ENCODE measurements at regions of chr1 and their contacts with region 1.

Region 1: GRCh38 chr1:221435504-221435904 is 306.4 kb downstream of the DUSP10 start:
- DNase-seq: no peak
- ATAC-seq: peak; percentile 71 to 75
- H3K4me3 ChIP-seq: no peak overlapping the region
- H3K27ac ChIP-seq: no peak overlapping the region
- H3K4me1 ChIP-seq: no peaks in the 10 kb centered on the region
- H3K27me3 ChIP-seq: no peaks in the 10 kb centered on the region

Region 2: DNA sequence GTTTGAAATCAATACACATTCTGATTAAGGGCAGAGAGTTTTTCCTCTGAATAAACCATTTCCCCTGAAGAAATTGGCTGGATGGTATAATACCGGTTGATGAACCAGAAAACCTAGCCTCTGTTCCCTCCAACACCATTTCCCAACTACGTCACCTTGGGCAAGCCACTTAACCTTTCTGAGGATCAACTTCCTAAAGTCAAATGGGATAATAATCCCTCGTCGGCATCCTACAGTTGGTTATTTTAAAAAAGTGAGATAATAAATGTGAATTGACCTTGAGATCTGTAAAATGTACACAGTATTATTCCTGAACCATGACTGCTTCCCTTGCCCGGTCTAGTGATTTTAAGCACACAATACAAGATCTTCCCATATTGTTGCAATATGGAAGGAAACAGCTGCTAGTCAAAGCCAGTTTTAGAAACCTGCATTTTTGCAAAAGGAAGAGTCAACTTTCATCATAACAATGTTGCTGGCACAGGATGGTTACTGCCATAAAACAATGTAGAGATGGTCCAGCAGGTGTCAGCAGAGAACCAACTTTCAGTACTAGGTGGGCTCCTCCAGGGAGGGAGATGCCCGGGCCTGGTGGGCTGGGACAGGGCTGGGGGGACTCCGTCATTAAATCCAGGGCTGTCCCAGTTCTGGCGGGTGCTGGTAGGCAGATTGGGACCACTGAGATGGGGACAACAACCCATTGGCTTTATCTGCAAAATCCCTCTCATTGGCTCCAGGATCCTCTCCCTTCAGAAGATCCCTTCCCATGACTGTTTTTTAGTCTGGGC is 561.4 kb before region 1 on chr1:
- intact Hi-C with region 1: loop called in 3 of 4 experiments (anchors 5 to 10 kb)
- DNase-seq: peak; percentile 49 to 76 (median 70)
- ATAC-seq: peak in 1 of 2 donors; percentile 27
- H3K4me3 ChIP-seq: no peak overlapping the region
- H3K27ac ChIP-seq: no peak overlapping the region
- H3K4me1 ChIP-seq: peaks cover 2% of the 10 kb centered on the region
- H3K27me3 ChIP-seq: no peaks in the 10 kb centered on the region

Region 3: DNA sequence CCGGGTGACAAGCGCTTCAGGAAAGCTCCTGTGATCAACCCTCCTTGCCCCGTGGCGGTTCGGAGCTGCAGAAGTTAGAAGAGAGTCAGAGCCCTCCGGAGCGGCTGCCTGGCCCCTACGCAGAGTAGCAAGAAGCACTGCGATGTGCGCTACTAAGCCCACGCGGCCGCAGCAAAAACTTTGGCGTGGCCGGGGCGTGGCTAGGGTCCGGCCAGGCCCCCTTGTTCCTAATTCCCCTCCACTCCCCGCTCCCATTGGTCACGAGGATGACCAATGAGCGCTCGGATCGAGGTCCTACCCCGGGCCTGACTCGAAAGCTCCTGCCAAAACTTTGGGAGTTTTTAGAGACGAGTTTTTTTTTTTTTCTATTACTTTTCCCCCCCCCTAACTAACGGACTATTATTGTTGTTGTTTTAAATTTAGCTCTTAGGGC is 556.4 kb before region 1 on chr1 and contains the start of gene HLX:
- intact Hi-C with region 1: loop called in 3 of 4 experiments (anchors 5 to 10 kb)
- DNase-seq: peak; percentile 94 to 97 (median 97)
- ATAC-seq: peak; percentile 95 to 96
- H3K4me3 ChIP-seq: peak within 1 kb of the TSS; percentile 85
- H3K27ac ChIP-seq: peak within 1 kb of the TSS; percentile 88
- H3K4me1 ChIP-seq: peaks cover 2% of the 10 kb centered on the region
- H3K27me3 ChIP-seq: no peaks in the 10 kb centered on the region
- total RNA-seq, gene HLX: 4.1 to 9.4 (median 6.9) TPM

Region 4: DNA sequence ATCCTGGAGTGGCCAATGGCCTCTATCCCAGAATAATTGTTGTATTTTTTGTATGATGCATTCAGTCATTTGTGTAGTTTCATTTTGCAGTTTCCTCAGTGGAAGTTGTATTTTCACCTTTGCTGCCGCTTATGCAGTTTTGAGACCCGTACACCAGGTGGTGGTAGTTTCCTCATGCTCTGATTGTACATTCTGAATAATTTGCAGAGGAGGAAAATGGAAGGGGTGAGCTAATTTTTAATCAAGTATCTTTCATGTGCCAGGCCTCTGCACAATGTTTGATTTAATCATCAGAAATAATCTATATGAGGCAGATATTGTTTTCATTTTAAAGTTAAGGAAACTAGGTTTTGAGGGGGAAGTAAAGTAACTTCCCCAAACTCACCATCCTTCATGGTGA is 526.7 kb before region 1 on chr1:
- intact Hi-C with region 1: loop called in 1 of 4 experiments (anchors 10 kb)
- DNase-seq: peak in 1 of 3 donors; percentile 49
- ATAC-seq: peak in 1 of 2 donors; percentile 40
- H3K4me3 ChIP-seq: no peak overlapping the region
- H3K27ac ChIP-seq: no peak overlapping the region
- H3K4me1 ChIP-seq: no peaks in the 10 kb centered on the region
- H3K27me3 ChIP-seq: no peaks in the 10 kb centered on the region

Region 5: DNA sequence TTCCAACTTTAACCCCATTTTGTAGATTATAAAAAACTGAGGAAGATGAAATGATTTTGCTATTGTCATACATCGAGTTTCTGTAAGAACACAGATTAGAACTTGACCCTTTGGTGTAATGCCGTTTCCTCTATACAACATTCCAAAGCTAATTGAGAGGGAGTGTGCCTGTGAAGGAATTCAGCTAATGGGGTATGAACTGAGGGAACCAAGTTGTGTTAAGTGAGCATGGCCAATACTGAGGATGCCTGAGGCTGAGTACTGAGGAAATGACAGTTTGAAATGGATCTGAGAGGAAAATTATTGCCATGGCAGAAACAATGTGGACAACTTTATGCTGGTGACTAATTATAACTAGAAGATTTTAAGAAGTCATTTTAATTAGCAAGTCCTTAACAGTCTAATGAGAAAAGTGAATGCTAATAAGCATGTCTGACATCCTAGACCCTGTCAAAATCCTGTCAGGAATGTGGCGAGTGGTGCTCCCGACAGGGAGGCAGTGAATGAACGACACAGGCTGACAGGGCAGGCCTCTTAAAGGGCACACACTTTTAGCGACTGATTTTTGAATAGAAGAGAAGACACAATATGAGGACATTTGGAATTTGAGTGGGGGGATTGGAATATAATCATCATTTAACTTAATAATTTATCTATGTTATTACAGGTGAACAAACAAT is 293.8 kb before region 1 on chr1:
- intact Hi-C with region 1: no loop called
- DNase-seq: no peak
- ATAC-seq: no peak
- H3K4me3 ChIP-seq: no peak overlapping the region
- H3K27ac ChIP-seq: no peak overlapping the region
- H3K4me1 ChIP-seq: no peaks in the 10 kb centered on the region
- H3K27me3 ChIP-seq: no peaks in the 10 kb centered on the region

Region 6: GRCh38 chr1:221263831-221264767 is 171.4 kb before region 1 on chr1:
- intact Hi-C with region 1: loop called in 3 of 4 experiments (anchors 5 to 10 kb)
- DNase-seq: peak in 2 of 3 donors; percentile 27 to 47
- ATAC-seq: peak; percentile 56 to 72
- H3K4me3 ChIP-seq: no peak overlapping the region
- H3K27ac ChIP-seq: peak overlapping the region; percentile 27
- H3K4me1 ChIP-seq: peaks cover 4% of the 10 kb centered on the region
- H3K27me3 ChIP-seq: no peaks in the 10 kb centered on the region

Measured in right cardiac atrium (tissue), 5 donors.